CD14-positive monocyte (primary cell): ENCODE measurements at regions of chr17 and their contacts with region 1.

Region 1: GRCh38 chr17:79045842-79046196 is 21.9 kb downstream of the C1QTNF1 start:
- DNase-seq: peak; percentile 46 to 67 (median 63)
- H3K4me3 ChIP-seq: no peak overlapping the region
- H3K4me3 Mint-ChIP-seq: no peak overlapping the region
- H3K27ac ChIP-seq: no peak overlapping the region
- H3K27ac Mint-ChIP-seq: no peak overlapping the region
- H3K4me1 ChIP-seq: no peaks in the 10 kb centered on the region
- H3K4me1 Mint-ChIP-seq: no peaks in the 10 kb centered on the region
- H3K27me3 ChIP-seq: peaks cover 0 to 2% of the 10 kb centered on the region in 2 donors
- H3K27me3 Mint-ChIP-seq: peaks cover 6 to 34% (median 24%) of the 10 kb centered on the region in 3 donors
- CTCF ChIP-seq: peak; percentile 97

Region 2: DNA sequence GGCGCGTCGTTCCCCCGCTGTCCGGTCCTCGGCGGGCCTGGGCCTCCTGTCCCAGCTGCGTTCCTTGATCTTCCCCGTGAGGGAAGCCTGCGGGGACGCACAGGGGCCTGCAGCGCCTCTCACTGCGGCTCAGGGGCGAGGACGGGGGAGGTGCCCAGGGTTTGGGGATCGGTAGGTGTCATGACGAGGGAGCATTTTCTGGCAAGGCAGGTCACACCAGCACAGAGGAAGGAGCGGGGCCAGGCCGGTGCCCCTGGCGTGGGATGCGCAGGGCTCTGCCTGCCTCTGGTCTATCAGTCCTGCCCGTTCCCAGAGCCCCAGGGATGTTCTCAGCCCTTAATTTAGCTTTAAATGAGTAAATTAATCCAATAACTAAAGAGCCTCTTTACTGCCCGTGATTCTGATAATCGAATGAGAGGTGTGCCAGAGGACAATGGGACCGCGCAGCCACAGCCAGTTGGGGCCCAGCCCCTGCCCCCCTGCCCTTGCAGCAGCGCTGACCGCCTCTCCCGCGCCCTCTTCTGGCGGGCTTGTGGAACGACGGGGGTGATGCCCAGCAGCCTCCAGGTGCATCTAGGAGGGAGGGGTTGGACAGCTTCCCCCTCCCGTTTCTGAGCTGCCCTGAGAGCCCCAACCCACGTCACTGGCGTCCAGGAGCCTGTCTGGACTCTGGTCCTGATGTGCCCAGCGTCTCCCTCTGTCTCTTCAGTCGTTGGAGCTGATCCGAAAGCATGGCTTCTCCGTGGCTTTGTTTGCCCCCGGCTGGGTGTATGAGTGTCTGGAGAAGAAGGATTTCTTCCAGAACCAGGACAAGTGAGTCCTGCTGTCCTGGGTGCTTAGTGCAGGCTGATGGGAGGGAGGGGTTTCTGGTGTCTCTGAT is 36.7 kb after region 1 on chr17:
- intact Hi-C with region 1: loop called (anchors 2 to 5 kb)
- DNase-seq: peak; percentile 33 to 53 (median 39)
- H3K4me3 ChIP-seq: no peak overlapping the region
- H3K4me3 Mint-ChIP-seq: no peak overlapping the region
- H3K27ac ChIP-seq: no peak overlapping the region
- H3K27ac Mint-ChIP-seq: no peak overlapping the region
- H3K4me1 ChIP-seq: no peaks in the 10 kb centered on the region
- H3K4me1 Mint-ChIP-seq: no peaks in the 10 kb centered on the region
- H3K27me3 ChIP-seq: no peaks in the 10 kb centered on the region
- H3K27me3 Mint-ChIP-seq: no peaks in the 10 kb centered on the region
- CTCF ChIP-seq: peak; percentile 97

Region 3: DNA sequence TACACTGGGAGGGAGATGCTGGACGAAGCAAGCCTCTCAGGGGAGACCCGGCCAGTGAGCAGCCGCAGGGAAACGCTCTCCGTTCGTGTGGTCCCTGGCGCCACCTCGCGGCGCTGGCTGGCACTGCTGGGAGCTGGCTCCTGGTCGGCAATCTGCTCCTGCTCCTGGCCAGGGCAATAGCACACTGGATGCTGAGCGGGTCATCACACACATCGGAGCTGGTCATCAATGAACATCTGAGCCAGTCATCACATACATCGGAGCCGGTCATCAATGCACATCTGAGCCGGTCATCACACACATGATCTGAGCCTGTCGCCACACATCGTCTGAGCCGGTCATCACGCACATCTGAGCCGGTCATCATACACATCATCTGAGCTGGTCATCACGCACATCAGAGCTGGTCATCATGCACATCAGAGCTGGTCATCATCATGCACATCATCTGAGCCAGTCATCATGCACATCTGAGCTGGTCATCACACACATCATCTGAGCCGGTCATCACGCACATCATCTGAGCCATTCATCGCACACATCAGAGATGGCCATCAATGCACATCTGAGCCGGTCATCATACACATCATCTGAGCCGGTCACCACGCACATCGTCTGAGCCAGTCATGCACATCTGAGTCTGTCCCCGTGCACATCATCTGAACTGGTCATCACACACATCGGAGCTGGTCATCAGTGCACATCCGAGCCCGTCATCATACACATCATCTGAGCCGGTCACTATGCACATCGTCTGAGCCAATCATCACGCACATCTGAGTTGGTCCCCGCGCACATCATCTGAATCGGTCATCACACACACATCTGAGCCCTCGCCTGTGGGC is 347.8 kb after region 1 on chr17:
- intact Hi-C with region 1: loop called (anchors 2 to 5 kb)
- DNase-seq: peak; percentile 17 to 44 (median 25)
- H3K4me3 ChIP-seq: no peak overlapping the region
- H3K4me3 Mint-ChIP-seq: no peak overlapping the region
- H3K27ac ChIP-seq: no peak overlapping the region
- H3K27ac Mint-ChIP-seq: peak overlapping the region in 1 of 7 donors; percentile 58
- H3K4me1 ChIP-seq: no peaks in the 10 kb centered on the region
- H3K4me1 Mint-ChIP-seq: no peaks in the 10 kb centered on the region
- H3K27me3 ChIP-seq: peaks cover 0 to 13% of the 10 kb centered on the region in 2 donors
- H3K27me3 Mint-ChIP-seq: peaks cover 27 to 47% (median 31%) of the 10 kb centered on the region in 3 donors
- CTCF ChIP-seq: peak; percentile 78